Tibial artery (tissue), 4 donors: ENCODE measurements at regions of chr6 and their contacts with region 1.

Region 1: GRCh38 chr6:81929828-81930227 is 177.3 kb upstream of the TENT5A start:
- DNase-seq: no peak
- H3K4me3 ChIP-seq: no peak overlapping the region
- H3K27ac ChIP-seq: no peak overlapping the region
- H3K4me1 ChIP-seq: peaks cover 0 to 9% (median 3%) of the 10 kb centered on the region in 4 donors
- H3K27me3 ChIP-seq: no peaks in the 10 kb centered on the region
- CTCF ChIP-seq: no peak

Region 2: GRCh38 chr6:81844686-81845085 is 85.1 kb before region 1 on chr6:
- intact Hi-C with region 1: no loop called
- DNase-seq: no peak
- H3K4me3 ChIP-seq: no peak overlapping the region
- H3K27ac ChIP-seq: peak overlapping the region; percentile 58 to 75
- H3K4me1 ChIP-seq: peaks cover 0 to 54% (median 12%) of the 10 kb centered on the region in 4 donors
- H3K27me3 ChIP-seq: no peaks in the 10 kb centered on the region
- CTCF ChIP-seq: no peak

Region 3: DNA sequence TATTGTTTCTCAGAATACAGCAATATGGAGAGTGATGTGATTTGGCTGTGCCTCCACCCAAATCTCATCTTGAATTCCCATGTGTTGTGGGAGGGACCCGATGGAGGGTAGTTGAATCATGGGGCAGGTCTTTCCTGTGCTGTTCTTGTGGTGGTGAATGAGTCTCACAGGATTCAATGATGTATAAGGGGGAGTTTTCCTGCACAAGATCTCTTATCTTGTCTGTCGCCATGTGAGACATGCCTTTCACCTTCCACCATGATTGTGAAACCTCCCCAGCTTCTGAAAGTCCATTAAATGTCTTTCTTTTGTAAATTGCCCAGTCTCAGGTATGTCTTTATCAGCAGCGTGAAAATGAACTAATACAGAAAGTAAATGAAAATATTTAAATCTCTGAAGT is 57.5 kb after region 1 on chr6:
- intact Hi-C with region 1: loop called (anchors 2 kb)
- DNase-seq: no peak
- H3K4me3 ChIP-seq: no peak overlapping the region
- H3K27ac ChIP-seq: no peak overlapping the region
- H3K4me1 ChIP-seq: peaks cover 0 to 5% (median under 1%) of the 10 kb centered on the region in 4 donors
- H3K27me3 ChIP-seq: no peaks in the 10 kb centered on the region
- CTCF ChIP-seq: no peak